ENCODE measurements at regions of chr19 and their contacts with region 1.

Region 1: GRCh38 chr19:7197760-7198696 is 96.2 kb downstream of the INSR start:
- DNase-seq: peak; percentile 95
- ATAC-seq: peak; percentile 84
- H3K4me3 ChIP-seq: peak overlapping the region; percentile 54 to 77 (median 72)
- H3K4me3 Mint-ChIP-seq: peak overlapping the region; percentile 93
- H3K27ac ChIP-seq: peak overlapping the region; percentile 60 to 72
- H3K27ac Mint-ChIP-seq: peak overlapping the region; percentile 95
- H3K4me1 ChIP-seq: peaks cover 11 to 19% of the 10 kb centered on the region in 2 donors
- H3K4me1 Mint-ChIP-seq: peaks cover 21% of the 10 kb centered on the region
- H3K27me3 ChIP-seq: no peaks in the 10 kb centered on the region
- H3K27me3 Mint-ChIP-seq: peaks cover under 1% of the 10 kb centered on the region
- CTCF ChIP-seq: no peak

Region 2: DNA sequence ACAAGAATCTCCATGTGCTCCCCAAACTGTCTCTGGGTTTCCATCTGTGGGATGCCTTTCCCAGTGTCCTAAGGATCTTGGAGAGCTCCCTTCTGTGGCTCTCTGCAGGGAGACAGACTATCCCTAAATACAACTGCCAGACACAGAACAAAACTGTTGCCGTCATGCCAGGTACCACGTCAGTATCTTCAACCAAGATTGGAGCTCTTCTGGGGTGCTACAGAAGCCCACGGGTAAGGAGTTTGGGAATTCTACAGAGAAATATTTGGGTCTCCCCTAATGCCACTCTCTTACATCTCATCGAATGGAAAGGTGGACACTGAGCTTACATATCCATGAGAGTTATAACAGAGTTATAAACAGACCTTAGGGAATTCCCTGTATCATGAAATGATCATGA is 134.7 kb before region 1 on chr19:
- CTCF ChIA-PET with region 1: no interaction called
- POLR2A ChIA-PET with region 1: no interaction called
- intact Hi-C with region 1: no loop called
- DNase-seq: no peak
- ATAC-seq: no peak
- H3K4me3 ChIP-seq: no peak overlapping the region
- H3K4me3 Mint-ChIP-seq: no peak overlapping the region
- H3K27ac ChIP-seq: no peak overlapping the region
- H3K27ac Mint-ChIP-seq: no peak overlapping the region
- H3K4me1 ChIP-seq: no peaks in the 10 kb centered on the region
- H3K4me1 Mint-ChIP-seq: no peaks in the 10 kb centered on the region
- H3K27me3 ChIP-seq: no peaks in the 10 kb centered on the region
- H3K27me3 Mint-ChIP-seq: no peaks in the 10 kb centered on the region
- CTCF ChIP-seq: no peak

Region 3: DNA sequence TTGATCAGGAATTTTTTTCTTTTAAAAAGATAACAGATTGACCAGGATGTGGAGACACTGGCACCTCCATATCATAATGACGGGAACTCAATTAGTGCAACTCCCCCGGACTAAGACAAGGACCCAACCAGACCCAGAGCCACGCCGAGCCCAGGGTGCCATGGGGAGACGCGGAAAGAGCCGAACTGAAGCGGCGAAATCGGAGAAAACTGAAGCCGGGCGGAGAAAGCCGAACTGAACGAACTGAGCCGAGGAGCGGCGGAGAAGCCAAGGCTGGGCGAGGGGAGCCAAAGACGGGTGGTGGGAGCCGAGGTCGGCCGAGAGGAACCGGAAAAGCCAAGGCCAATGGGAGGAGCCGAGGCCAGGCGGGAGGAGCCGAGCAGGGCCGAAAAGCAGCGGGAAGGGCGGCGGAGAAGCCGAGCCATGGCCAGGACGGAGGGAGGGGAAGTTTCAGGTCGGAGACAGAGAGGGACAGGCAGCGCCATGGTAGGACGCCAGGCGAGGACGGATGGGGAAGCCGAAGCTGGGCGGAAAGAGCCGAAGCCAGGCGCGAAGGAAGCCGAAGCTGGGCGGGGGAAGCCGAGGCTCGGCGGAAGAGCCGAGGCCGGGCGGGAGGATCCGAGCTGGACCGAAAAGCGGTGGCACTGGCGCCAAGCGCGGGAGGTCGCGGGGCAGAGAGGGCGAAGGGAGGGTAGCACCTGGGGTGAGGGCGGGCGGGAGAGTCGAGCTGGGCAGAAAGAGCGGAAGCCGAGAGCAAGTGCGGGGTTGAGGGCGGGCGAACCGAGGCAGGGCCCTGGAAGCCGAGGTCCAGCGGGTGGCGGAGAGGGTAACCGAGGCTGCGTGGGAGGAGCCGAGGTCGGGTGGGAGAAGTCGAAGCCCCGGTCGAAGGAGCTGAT is 99.1 kb before region 1 on chr19:
- CTCF ChIA-PET with region 1: no interaction called
- POLR2A ChIA-PET with region 1: no interaction called
- intact Hi-C with region 1: loop called (anchors 5 kb)
- DNase-seq: peak; percentile 91
- ATAC-seq: peak; percentile 91
- H3K4me3 ChIP-seq: peak overlapping the region; percentile 46 to 87 (median 82)
- H3K4me3 Mint-ChIP-seq: peak overlapping the region; percentile 93
- H3K27ac ChIP-seq: peak overlapping the region; percentile 76 to 93
- H3K27ac Mint-ChIP-seq: peak overlapping the region; percentile 90
- H3K4me1 ChIP-seq: peaks cover 10 to 14% of the 10 kb centered on the region in 2 donors
- H3K4me1 Mint-ChIP-seq: peaks cover 23% of the 10 kb centered on the region
- H3K27me3 ChIP-seq: no peaks in the 10 kb centered on the region
- H3K27me3 Mint-ChIP-seq: no peaks in the 10 kb centered on the region
- CTCF ChIP-seq: no peak

Region 4: DNA sequence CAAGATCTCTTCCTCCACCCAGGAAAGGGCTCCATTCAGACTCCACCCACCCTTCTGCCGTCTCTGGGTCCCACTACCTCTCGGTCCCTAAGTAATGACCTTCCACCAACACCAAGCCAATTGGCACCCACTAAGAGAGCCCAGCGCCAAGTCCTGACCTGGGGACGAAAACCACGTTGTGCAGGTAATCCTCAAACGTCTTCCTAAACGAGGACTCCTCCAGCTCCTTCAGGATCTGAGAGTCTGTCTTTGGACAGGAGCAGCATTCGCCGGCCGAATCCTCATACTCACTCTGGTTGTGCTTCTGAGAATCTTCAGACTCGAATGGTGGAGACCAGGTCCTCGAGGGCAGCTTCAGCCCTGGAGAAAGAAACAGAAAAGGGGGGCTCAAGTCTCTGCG is 45.5 kb before region 1 on chr19:
- CTCF ChIA-PET with region 1: interaction called, 4 read pairs
- POLR2A ChIA-PET with region 1: interaction called, 11 read pairs
- intact Hi-C with region 1: loop called (anchors 1 kb)
- DNase-seq: no peak
- ATAC-seq: no peak
- H3K4me3 ChIP-seq: no peak overlapping the region
- H3K4me3 Mint-ChIP-seq: no peak overlapping the region
- H3K27ac ChIP-seq: no peak overlapping the region
- H3K27ac Mint-ChIP-seq: peak overlapping the region; percentile 50
- H3K4me1 ChIP-seq: peaks cover 0 to 6% of the 10 kb centered on the region in 2 donors
- H3K4me1 Mint-ChIP-seq: peaks cover 2% of the 10 kb centered on the region
- H3K27me3 ChIP-seq: no peaks in the 10 kb centered on the region
- H3K27me3 Mint-ChIP-seq: no peaks in the 10 kb centered on the region
- CTCF ChIP-seq: no peak

Region 5: GRCh38 chr19:7159105-7159933 is 38.7 kb before region 1 on chr19:
- CTCF ChIA-PET with region 1: no interaction called
- POLR2A ChIA-PET with region 1: interaction called, 11 read pairs
- intact Hi-C with region 1: no loop called
- DNase-seq: no peak
- ATAC-seq: no peak
- H3K4me3 ChIP-seq: no peak overlapping the region
- H3K4me3 Mint-ChIP-seq: no peak overlapping the region
- H3K27ac ChIP-seq: no peak overlapping the region
- H3K27ac Mint-ChIP-seq: no peak overlapping the region
- H3K4me1 ChIP-seq: no peaks in the 10 kb centered on the region
- H3K4me1 Mint-ChIP-seq: no peaks in the 10 kb centered on the region
- H3K27me3 ChIP-seq: no peaks in the 10 kb centered on the region
- H3K27me3 Mint-ChIP-seq: no peaks in the 10 kb centered on the region
- CTCF ChIP-seq: no peak

Region 6: GRCh38 chr19:7177926-7178325 is 20.1 kb before region 1 on chr19:
- CTCF ChIA-PET with region 1: interaction called, 9 read pairs
- POLR2A ChIA-PET with region 1: interaction called, 10 read pairs
- intact Hi-C with region 1: loop called (anchors 1 kb)
- DNase-seq: no peak
- ATAC-seq: no peak
- H3K4me3 ChIP-seq: no peak overlapping the region
- H3K4me3 Mint-ChIP-seq: no peak overlapping the region
- H3K27ac ChIP-seq: no peak overlapping the region
- H3K27ac Mint-ChIP-seq: peak overlapping the region; percentile 46
- H3K4me1 ChIP-seq: peaks cover 26 to 33% of the 10 kb centered on the region in 2 donors
- H3K4me1 Mint-ChIP-seq: peaks cover 40% of the 10 kb centered on the region
- H3K27me3 ChIP-seq: no peaks in the 10 kb centered on the region
- H3K27me3 Mint-ChIP-seq: peaks cover 5% of the 10 kb centered on the region
- CTCF ChIP-seq: no peak

Region 7: DNA sequence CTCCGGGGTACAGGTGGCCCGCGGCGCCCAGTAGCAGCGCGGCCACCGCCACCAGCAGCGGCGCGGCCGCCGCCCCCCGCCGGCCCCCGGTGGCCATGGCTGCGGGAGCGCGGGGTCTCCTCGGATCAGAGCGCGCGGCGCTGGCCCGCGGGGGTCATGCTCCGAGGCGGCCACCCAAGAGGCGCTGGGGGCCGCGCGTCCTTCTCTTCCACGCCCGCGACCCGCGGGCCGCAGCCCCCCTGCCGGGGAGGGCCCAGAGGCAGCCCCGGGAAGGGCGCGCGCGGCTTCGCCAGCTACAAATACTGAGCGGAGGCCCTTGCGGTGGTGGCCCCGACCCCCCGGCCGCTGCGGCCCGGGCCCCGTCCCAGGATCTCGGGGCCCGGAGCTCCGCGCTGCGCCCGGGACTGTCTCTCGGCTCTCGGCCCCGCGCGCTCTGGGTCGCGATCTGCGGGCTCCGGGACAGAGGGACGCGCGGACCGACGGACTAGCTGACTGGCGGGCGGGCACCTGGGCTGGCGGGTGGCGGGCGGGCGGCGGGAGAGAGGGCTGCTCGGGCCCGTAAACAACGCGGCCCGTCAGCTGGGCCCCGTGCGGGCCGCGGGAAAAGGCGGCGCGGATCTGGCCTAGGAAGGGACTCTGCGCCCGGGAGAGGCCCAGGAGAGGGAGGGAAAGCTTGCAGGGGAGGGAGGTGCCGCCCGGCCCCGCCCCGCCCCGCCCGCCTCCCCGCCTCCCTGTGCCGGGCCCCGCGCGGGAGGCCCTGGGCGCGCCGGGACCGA is 96.0 kb after region 1 on chr19 and contains the start of gene INSR:
- CTCF ChIA-PET with region 1: no interaction called
- POLR2A ChIA-PET with region 1: no interaction called
- intact Hi-C with region 1: loop called (anchors 1 kb)
- DNase-seq: peak; percentile 62
- ATAC-seq: peak; percentile 83
- H3K4me3 ChIP-seq: peak within 1 kb of the TSS; percentile 36 to 67 (median 59)
- H3K4me3 Mint-ChIP-seq: peak within 1 kb of the TSS; percentile 87
- H3K27ac ChIP-seq: no peak within 1 kb of the TSS
- H3K27ac Mint-ChIP-seq: peak within 1 kb of the TSS; percentile 15
- H3K4me1 ChIP-seq: peaks cover 12 to 22% of the 10 kb centered on the region in 2 donors
- H3K4me1 Mint-ChIP-seq: peaks cover 25% of the 10 kb centered on the region
- H3K27me3 ChIP-seq: peaks cover 0 to 28% (median 6%) of the 10 kb centered on the region in 4 experiments
- H3K27me3 Mint-ChIP-seq: peaks cover 32% of the 10 kb centered on the region
- CTCF ChIP-seq: no peak
- total RNA-seq, gene INSR: 6.3 and 8.8 TPM in 2 replicates

Region 8: DNA sequence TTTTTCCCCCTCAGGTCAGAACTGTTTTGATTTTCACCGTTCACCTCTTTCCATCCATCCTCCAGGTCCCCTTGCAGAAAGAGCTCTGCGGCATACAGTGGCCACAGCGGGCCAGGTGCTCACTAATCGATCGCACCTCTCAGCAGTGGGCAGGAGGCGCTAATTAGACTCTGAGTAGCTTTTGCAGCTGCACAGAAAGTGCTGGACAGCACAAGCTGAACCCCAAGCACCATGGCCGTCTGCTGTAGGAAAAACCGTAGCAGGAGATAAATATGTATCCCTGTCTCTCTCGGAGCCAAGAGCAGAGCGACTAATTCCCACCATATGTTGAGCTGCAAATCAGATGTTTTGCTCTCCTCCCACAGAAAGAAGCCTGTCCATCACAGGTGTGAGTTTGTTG is 236.4 kb after region 1 on chr19:
- CTCF ChIA-PET with region 1: no interaction called
- POLR2A ChIA-PET with region 1: no interaction called
- intact Hi-C with region 1: no loop called
- DNase-seq: no peak
- ATAC-seq: no peak
- H3K4me3 ChIP-seq: no peak overlapping the region
- H3K4me3 Mint-ChIP-seq: no peak overlapping the region
- H3K27ac ChIP-seq: no peak overlapping the region
- H3K27ac Mint-ChIP-seq: no peak overlapping the region
- H3K4me1 ChIP-seq: no peaks in the 10 kb centered on the region
- H3K4me1 Mint-ChIP-seq: no peaks in the 10 kb centered on the region
- H3K27me3 ChIP-seq: no peaks in the 10 kb centered on the region
- H3K27me3 Mint-ChIP-seq: no peaks in the 10 kb centered on the region
- CTCF ChIP-seq: no peak

Region 9: GRCh38 chr19:8307965-8308866 is 1110.2 kb after region 1 on chr19 and contains the start of gene CD320:
- CTCF ChIA-PET with region 1: no interaction called
- POLR2A ChIA-PET with region 1: no interaction called
- intact Hi-C with region 1: loop called (anchors 10 kb)
- DNase-seq: peak; percentile 94
- ATAC-seq: peak; percentile 91
- H3K4me3 ChIP-seq: peak within 1 kb of the TSS; percentile 44 to 68 (median 66)
- H3K4me3 Mint-ChIP-seq: peak within 1 kb of the TSS; percentile 93
- H3K27ac ChIP-seq: peak within 1 kb of the TSS in 1 of 2 donors; percentile 49
- H3K27ac Mint-ChIP-seq: peak within 1 kb of the TSS; percentile 87
- H3K4me1 ChIP-seq: peaks cover 7 to 18% of the 10 kb centered on the region in 2 donors
- H3K4me1 Mint-ChIP-seq: peaks cover 24% of the 10 kb centered on the region
- H3K27me3 ChIP-seq: no peaks in the 10 kb centered on the region
- H3K27me3 Mint-ChIP-seq: no peaks in the 10 kb centered on the region
- CTCF ChIP-seq: no peak
- total RNA-seq, gene CD320: 28.7 and 30.5 TPM in 2 replicates